ENCODE measurements at regions of chr15 and their contacts with region 1.

Region 1: DNA sequence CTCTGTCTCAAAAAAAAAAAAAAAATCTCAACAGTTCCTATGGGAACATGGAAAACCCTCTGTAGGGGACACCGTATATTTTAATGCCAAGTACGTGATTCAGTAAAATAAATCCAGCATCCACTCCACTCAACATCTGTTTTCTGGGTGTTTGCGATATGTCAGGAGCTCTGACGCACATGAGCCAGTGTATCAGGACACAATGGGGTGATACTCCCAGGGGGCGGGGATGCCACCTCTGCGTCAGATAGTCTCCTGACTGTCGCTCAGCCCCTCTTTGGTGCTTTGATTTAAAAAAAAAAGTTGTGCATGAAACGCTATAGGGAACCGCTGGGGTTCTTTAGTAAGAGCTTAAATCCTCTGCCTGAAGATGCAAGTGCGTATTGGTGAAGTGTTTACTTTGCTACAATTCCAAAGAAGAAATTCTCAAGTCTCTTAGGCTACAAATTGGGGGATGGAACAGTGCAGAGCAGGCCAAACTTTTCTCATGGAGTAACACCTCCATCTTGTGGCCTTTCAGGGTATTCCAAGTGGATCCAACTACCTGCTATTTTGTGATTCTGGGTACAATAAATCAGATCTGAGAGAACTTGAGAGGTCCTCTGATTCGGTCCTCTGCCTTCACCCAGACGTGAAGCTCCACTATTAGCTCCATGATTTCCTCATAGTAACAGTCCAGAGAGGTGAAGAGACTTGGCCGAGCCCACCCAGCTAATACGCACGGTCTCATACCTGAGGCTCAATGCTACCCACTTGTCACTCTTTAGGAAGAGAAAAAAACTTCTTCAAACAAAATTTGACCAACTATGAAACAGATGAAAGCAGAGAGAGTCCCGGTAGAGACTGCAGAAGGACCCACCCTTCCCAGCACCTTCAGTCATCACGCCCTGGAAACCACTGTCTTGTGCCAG is 9.3 kb upstream of the NR2E3 start:
- DNase-seq: no peak
- H3K4me3 ChIP-seq: no peak overlapping the region
- H3K27ac ChIP-seq: no peak overlapping the region
- H3K4me1 ChIP-seq: no peaks in the 10 kb centered on the region
- H3K27me3 ChIP-seq: peaks cover 0 to 9% (median 0%) of the 10 kb centered on the region in 3 donors
- CTCF ChIP-seq: peak; percentile 40 to 85 (median 75)
- EP300 ChIP-seq: no peak
- POLR2A ChIP-seq: no peak

Region 2: GRCh38 chr15:71743861-71744382 is 57.2 kb before region 1 on chr15:
- intact Hi-C with region 1: loop called (anchors 2 kb)
- DNase-seq: no peak
- H3K4me3 ChIP-seq: no peak overlapping the region
- H3K27ac ChIP-seq: no peak overlapping the region
- H3K4me1 ChIP-seq: no peaks in the 10 kb centered on the region
- H3K27me3 ChIP-seq: no peaks in the 10 kb centered on the region
- CTCF ChIP-seq: peak; percentile 28 to 56 (median 50)
- EP300 ChIP-seq: no peak
- POLR2A ChIP-seq: no peak

Measured in sigmoid colon (tissue), 7 donors.